ENCODE measurements at regions of chr11 and their contacts with region 1.

Region 1: GRCh38 chr11:95067039-95067840 is 521 bp downstream of the SRSF8 start:
- DNase-seq: peak; percentile 68 to 72
- H3K4me3 ChIP-seq: peak overlapping the region; percentile 89
- H3K27ac ChIP-seq: peak overlapping the region; percentile 85
- H3K4me1 ChIP-seq: peaks cover 20% of the 10 kb centered on the region
- H3K27me3 ChIP-seq: no peaks in the 10 kb centered on the region
- CTCF ChIP-seq: peak; percentile 53

Region 2: GRCh38 chr11:94602430-94603372 is 464.5 kb before region 1 on chr11:
- CTCF ChIA-PET with region 1: no interaction called
- POLR2A ChIA-PET with region 1: no interaction called
- intact Hi-C with region 1: loop called (anchors 10 kb)
- DNase-seq: peak; percentile 66 to 80
- H3K4me3 ChIP-seq: no peak overlapping the region
- H3K27ac ChIP-seq: peak overlapping the region; percentile 27; the same call in 1 of the 2 replicates
- H3K4me1 ChIP-seq: peaks cover 11% of the 10 kb centered on the region; the same call in 1 of the 2 replicates
- H3K27me3 ChIP-seq: no peaks in the 10 kb centered on the region
- CTCF ChIP-seq: peak; percentile 74

Region 3: GRCh38 chr11:95089620-95090542 is 22.6 kb after region 1 on chr11 and contains the start of gene ENDOD1:
- CTCF ChIA-PET with region 1: interaction called, 4 read pairs
- POLR2A ChIA-PET with region 1: no interaction called
- intact Hi-C with region 1: loop called (anchors 2 kb)
- DNase-seq: peak; percentile 68 to 81
- H3K4me3 ChIP-seq: peak within 1 kb of the TSS; percentile 93
- H3K27ac ChIP-seq: peak within 1 kb of the TSS; percentile 24; the same call in 1 of the 2 replicates
- H3K4me1 ChIP-seq: peaks cover 41% of the 10 kb centered on the region
- H3K27me3 ChIP-seq: no peaks in the 10 kb centered on the region
- CTCF ChIP-seq: peak; percentile 27; the same call in 1 of the 2 replicates
- total RNA-seq, gene ENDOD1: 8.0 and 8.1 TPM in 2 replicates

Region 4: DNA sequence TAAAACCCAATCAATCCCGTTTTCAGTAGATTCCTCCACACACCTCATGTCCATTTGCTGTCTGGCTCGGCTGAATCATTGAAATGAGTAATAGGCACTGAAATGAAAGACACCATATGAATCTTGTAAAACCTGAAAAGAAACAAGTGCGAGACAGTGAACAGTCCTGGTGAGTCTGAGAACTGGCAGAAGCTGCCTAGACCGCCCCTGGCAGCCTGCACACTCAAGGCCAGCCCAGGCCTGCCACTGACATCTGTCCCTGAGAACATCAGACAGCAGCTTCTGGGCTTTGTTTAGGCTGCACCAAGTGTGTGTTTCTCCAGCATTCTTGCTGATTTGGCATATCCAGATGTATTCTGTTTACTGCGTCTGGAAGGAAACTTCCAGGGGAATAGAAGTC is 67.3 kb after region 1 on chr11:
- CTCF ChIA-PET with region 1: interaction called, 3 read pairs
- POLR2A ChIA-PET with region 1: no interaction called
- intact Hi-C with region 1: loop called (anchors 1 kb)
- DNase-seq: peak; percentile 73 to 94
- H3K4me3 ChIP-seq: no peak overlapping the region
- H3K27ac ChIP-seq: peak overlapping the region; percentile 43
- H3K4me1 ChIP-seq: peaks cover 25% of the 10 kb centered on the region
- H3K27me3 ChIP-seq: no peaks in the 10 kb centered on the region
- CTCF ChIP-seq: no peak

Region 5: GRCh38 chr11:96424693-96425092 is 1357.5 kb after region 1 on chr11:
- CTCF ChIA-PET with region 1: interaction called, 3 read pairs
- POLR2A ChIA-PET with region 1: no interaction called
- intact Hi-C with region 1: loop called (anchors 5 kb)
- DNase-seq: peak; percentile 5 to 75
- H3K4me3 ChIP-seq: no peak overlapping the region
- H3K27ac ChIP-seq: no peak overlapping the region
- H3K4me1 ChIP-seq: peaks cover 10% of the 10 kb centered on the region; the same call in 1 of the 2 replicates
- H3K27me3 ChIP-seq: no peaks in the 10 kb centered on the region
- CTCF ChIP-seq: no peak